Gastrocnemius medialis (tissue), 4 donors: ENCODE measurements at regions of chr17 and their contacts with region 1.

Region 1: GRCh38 chr17:63954402-63955063 is 18.2 kb downstream of the SCN4A start:
- DNase-seq: peak; percentile 68 to 84
- ATAC-seq: peak; percentile 72 to 79
- H3K4me3 ChIP-seq: peak overlapping the region in 1 of 4 donors; percentile 8
- H3K27ac ChIP-seq: peak overlapping the region; percentile 96 to 100 (median 99)
- H3K4me1 ChIP-seq: peaks cover 63 to 82% of the 10 kb centered on the region in 2 donors
- H3K27me3 ChIP-seq: no peaks in the 10 kb centered on the region
- CTCF ChIP-seq: no peak
- POLR2A ChIP-seq: peak; percentile 18 to 26

Region 2: GRCh38 chr17:63984651-63985386 is 30.3 kb after region 1 on chr17:
- in situ Hi-C with region 1: no loop called
- intact Hi-C with region 1: loop called (anchors 1 kb)
- DNase-seq: peak; percentile 84 to 94
- ATAC-seq: peak; percentile 54 to 55
- H3K4me3 ChIP-seq: peak overlapping the region in 2 of 4 donors; percentile 4 to 23
- H3K27ac ChIP-seq: peak overlapping the region; percentile 98 to 100 (median 99)
- H3K4me1 ChIP-seq: peaks cover 75 to 76% of the 10 kb centered on the region in 2 donors
- H3K27me3 ChIP-seq: no peaks in the 10 kb centered on the region
- CTCF ChIP-seq: peak in 1 of 5 experiments; percentile 3
- POLR2A ChIP-seq: peak; percentile 36 to 44